CD8-positive, alpha-beta T cell (primary cell): ENCODE measurements at regions of chr1 and their contacts with region 1.

Region 1: GRCh38 chr1:180631766-180632325 is at the start of gene XPR1:
- DNase-seq: peak; percentile 97 to 99 (median 99)
- ATAC-seq: peak; percentile 96
- H3K4me3 ChIP-seq: peak within 1 kb of the TSS; percentile 93 to 94
- H3K4me3 Mint-ChIP-seq: no peak within 1 kb of the TSS
- H3K27ac ChIP-seq: peak within 1 kb of the TSS; percentile 89 to 94
- H3K27ac Mint-ChIP-seq: peak within 1 kb of the TSS; percentile 43
- H3K4me1 ChIP-seq: peaks cover 23% of the 10 kb centered on the region
- H3K4me1 Mint-ChIP-seq: peaks cover 20% of the 10 kb centered on the region
- H3K27me3 ChIP-seq: no peaks in the 10 kb centered on the region
- H3K27me3 Mint-ChIP-seq: peaks cover 3% of the 10 kb centered on the region
- CTCF ChIP-seq: no peak
- total RNA-seq, gene XPR1: 11.6 to 12.3 TPM

Region 2: GRCh38 chr1:179025125-179025974 is 1606.5 kb before region 1 on chr1 and contains the start of gene FAM20B:
- CTCF ChIA-PET with region 1: no interaction called
- POLR2A ChIA-PET with region 1: no interaction called
- intact Hi-C with region 1: loop called in 1 of 2 experiments (anchors 10 kb)
- DNase-seq: peak; percentile 82 to 94 (median 90)
- ATAC-seq: peak; percentile 85
- H3K4me3 ChIP-seq: peak within 1 kb of the TSS; percentile 70 to 81
- H3K4me3 Mint-ChIP-seq: peak within 1 kb of the TSS; percentile 87
- H3K27ac ChIP-seq: peak within 1 kb of the TSS; percentile 77 to 83
- H3K27ac Mint-ChIP-seq: peak within 1 kb of the TSS; percentile 88
- H3K4me1 ChIP-seq: peaks cover 25% of the 10 kb centered on the region
- H3K4me1 Mint-ChIP-seq: peaks cover 40% of the 10 kb centered on the region
- H3K27me3 ChIP-seq: no peaks in the 10 kb centered on the region
- H3K27me3 Mint-ChIP-seq: no peaks in the 10 kb centered on the region
- CTCF ChIP-seq: no peak
- total RNA-seq, gene FAM20B: 11.1 to 11.2 TPM

Region 3: DNA sequence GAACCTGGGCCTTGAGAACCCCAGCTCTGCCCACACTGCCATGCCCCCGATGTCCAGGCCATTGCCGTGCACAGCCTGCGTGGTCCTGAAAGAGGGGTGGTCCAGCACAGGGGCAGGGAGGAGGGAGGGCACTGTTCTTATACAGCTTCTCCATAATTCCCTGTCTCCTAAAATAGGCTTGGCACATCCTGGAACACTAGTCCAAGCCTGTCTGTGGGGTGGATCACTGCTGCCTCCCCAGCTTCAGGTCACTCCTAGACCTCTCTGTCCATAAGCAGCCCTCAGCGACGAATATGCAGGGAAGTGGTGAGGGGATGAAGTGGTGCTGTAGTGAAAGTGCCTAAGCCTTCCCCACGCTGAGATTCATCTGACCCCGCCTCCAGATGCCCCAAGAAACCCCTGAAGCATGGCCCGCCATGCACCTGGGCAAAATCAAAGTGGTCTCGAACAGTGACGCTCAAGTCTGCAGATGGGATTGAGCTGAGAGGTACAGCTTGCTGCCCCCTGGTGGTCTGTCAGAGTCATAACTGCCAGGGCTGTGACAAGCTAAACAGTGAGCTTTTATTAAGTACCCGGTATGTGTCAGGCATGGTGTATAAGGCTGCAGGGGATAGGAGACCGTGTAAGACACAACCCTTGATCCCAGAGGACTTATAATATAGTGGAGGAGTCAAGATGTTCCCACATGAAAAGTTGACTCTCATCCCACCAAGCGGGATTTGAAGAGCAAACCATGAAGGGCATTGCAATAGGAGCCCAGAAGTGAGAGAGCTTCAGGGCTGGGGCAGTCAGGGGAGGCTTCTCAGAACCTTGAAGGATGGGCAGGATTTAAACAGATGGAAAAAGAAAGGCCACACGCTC is 822.1 kb before region 1 on chr1:
- CTCF ChIA-PET with region 1: no interaction called
- POLR2A ChIA-PET with region 1: no interaction called
- intact Hi-C with region 1: loop called in 1 of 2 experiments (anchors 10 kb)
- DNase-seq: peak; percentile 37 to 87 (median 71)
- ATAC-seq: peak; percentile 84
- H3K4me3 ChIP-seq: no peak overlapping the region
- H3K4me3 Mint-ChIP-seq: peak overlapping the region; percentile 1
- H3K27ac ChIP-seq: no peak overlapping the region
- H3K27ac Mint-ChIP-seq: no peak overlapping the region
- H3K4me1 ChIP-seq: peaks cover 11% of the 10 kb centered on the region
- H3K4me1 Mint-ChIP-seq: peaks cover 12% of the 10 kb centered on the region
- H3K27me3 ChIP-seq: no peaks in the 10 kb centered on the region
- H3K27me3 Mint-ChIP-seq: peaks cover 5% of the 10 kb centered on the region
- CTCF ChIP-seq: peak; percentile 82

Region 4: DNA sequence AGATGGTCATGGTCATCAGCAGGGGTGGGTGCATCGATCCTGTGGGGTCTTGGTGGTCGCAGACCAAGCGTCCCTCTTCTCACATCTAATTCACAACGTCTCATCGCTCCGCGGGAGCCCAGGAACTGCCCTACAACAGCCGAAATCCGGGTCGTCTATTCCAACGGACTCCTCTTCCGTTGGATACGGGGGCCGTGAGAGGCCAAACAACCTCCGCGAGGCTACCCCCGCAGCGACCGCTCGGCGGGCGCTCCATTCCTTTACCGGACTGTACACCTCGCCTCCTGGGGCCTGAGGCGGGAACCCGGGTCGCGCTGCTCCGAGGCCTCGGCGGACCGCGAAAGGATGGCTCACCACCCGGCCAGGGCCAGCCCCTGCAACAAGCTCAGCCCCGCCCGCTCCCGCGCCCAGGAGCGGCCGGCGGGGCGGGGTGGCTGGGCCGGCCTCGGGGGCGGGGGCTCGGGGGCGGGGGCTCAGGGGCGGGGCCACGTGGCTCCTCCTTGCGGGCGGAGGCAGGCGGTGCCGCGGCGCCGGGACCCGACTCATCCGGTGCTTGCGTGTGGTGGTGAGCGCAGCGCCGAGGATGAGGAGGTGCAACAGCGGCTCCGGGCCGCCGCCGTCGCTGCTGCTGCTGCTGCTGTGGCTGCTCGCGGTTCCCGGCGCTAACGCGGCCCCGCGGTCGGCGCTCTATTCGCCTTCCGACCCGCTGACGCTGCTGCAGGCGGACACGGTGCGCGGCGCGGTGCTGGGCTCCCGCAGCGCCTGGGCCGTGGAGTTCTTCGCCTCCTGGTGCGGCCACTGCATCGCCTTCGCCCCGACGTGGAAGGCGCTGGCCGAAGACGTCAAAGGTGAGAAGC is 477.3 kb before region 1 on chr1 and contains the start of gene QSOX1:
- CTCF ChIA-PET with region 1: no interaction called
- POLR2A ChIA-PET with region 1: no interaction called
- intact Hi-C with region 1: loop called in 1 of 2 experiments (anchors 1 kb)
- DNase-seq: peak; percentile 77 to 95 (median 88)
- ATAC-seq: peak; percentile 96
- H3K4me3 ChIP-seq: peak within 1 kb of the TSS; percentile 86
- H3K4me3 Mint-ChIP-seq: peak within 1 kb of the TSS; percentile 91
- H3K27ac ChIP-seq: peak within 1 kb of the TSS; percentile 60 to 62
- H3K27ac Mint-ChIP-seq: peak within 1 kb of the TSS; percentile 87
- H3K4me1 ChIP-seq: peaks cover 22% of the 10 kb centered on the region
- H3K4me1 Mint-ChIP-seq: peaks cover 43% of the 10 kb centered on the region
- H3K27me3 ChIP-seq: no peaks in the 10 kb centered on the region
- H3K27me3 Mint-ChIP-seq: no peaks in the 10 kb centered on the region
- CTCF ChIP-seq: no peak
- total RNA-seq, gene QSOX1: 12.8 to 12.9 TPM

Region 5: GRCh38 chr1:180691301-180691913 is 59.6 kb after region 1 on chr1:
- CTCF ChIA-PET with region 1: no interaction called
- POLR2A ChIA-PET with region 1: no interaction called
- intact Hi-C with region 1: no loop called
- DNase-seq: no peak
- ATAC-seq: no peak
- H3K4me3 ChIP-seq: no peak overlapping the region
- H3K4me3 Mint-ChIP-seq: no peak overlapping the region
- H3K27ac ChIP-seq: no peak overlapping the region
- H3K27ac Mint-ChIP-seq: no peak overlapping the region
- H3K4me1 ChIP-seq: peaks cover 20% of the 10 kb centered on the region
- H3K4me1 Mint-ChIP-seq: peaks cover 46% of the 10 kb centered on the region
- H3K27me3 ChIP-seq: no peaks in the 10 kb centered on the region
- H3K27me3 Mint-ChIP-seq: no peaks in the 10 kb centered on the region
- CTCF ChIP-seq: no peak

Region 6: DNA sequence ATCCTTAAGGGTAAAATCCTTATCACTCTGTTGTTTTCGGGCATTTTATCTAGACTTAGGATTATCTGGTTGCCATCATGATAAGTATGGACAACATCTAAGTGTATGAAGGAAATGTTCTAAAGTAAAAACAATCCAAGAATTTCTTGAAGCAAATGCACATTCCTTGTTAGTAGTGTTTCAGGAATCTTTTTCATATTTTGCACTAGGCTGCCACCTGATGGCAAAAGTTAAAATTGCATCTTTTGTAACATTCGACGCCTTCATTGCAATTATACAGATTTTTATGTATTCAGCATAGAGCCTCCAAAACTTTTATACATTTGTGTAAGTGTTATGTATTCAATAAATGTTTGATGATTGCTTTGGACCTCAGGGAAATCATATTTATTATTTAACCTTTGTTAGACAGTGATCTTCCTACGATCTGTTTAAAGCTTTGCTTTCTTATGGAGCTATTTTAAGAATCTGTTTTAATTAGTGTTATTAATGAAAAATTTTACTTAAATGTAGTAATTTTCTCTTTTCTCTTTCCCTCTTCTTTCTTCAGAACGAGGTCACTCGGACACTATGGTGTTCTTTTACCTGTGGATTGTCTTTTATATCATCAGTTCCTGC is 231.4 kb after region 1 on chr1:
- CTCF ChIA-PET with region 1: interaction called, 12 read pairs
- POLR2A ChIA-PET with region 1: no interaction called
- intact Hi-C with region 1: loop called (anchors 5 kb)
- DNase-seq: peak in 4 of 9 experiments; percentile 11 to 63 (median 42)
- ATAC-seq: no peak
- H3K4me3 ChIP-seq: no peak overlapping the region
- H3K4me3 Mint-ChIP-seq: no peak overlapping the region
- H3K27ac ChIP-seq: no peak overlapping the region
- H3K27ac Mint-ChIP-seq: no peak overlapping the region
- H3K4me1 ChIP-seq: no peaks in the 10 kb centered on the region
- H3K4me1 Mint-ChIP-seq: no peaks in the 10 kb centered on the region
- H3K27me3 ChIP-seq: no peaks in the 10 kb centered on the region
- H3K27me3 Mint-ChIP-seq: no peaks in the 10 kb centered on the region
- CTCF ChIP-seq: peak; percentile 93

Region 7: GRCh38 chr1:181105134-181106021 is 473.5 kb after region 1 on chr1:
- CTCF ChIA-PET with region 1: no interaction called
- POLR2A ChIA-PET with region 1: no interaction called
- intact Hi-C with region 1: loop called (anchors 5 kb)
- DNase-seq: peak; percentile 80 to 96 (median 94)
- ATAC-seq: peak; percentile 85
- H3K4me3 ChIP-seq: peak overlapping the region; percentile 61 to 76
- H3K4me3 Mint-ChIP-seq: peak overlapping the region; percentile 90
- H3K27ac ChIP-seq: peak overlapping the region; percentile 52 to 74
- H3K27ac Mint-ChIP-seq: peak overlapping the region; percentile 91
- H3K4me1 ChIP-seq: peaks cover 25% of the 10 kb centered on the region
- H3K4me1 Mint-ChIP-seq: peaks cover 40% of the 10 kb centered on the region
- H3K27me3 ChIP-seq: no peaks in the 10 kb centered on the region
- H3K27me3 Mint-ChIP-seq: no peaks in the 10 kb centered on the region
- CTCF ChIP-seq: no peak

Region 8: DNA sequence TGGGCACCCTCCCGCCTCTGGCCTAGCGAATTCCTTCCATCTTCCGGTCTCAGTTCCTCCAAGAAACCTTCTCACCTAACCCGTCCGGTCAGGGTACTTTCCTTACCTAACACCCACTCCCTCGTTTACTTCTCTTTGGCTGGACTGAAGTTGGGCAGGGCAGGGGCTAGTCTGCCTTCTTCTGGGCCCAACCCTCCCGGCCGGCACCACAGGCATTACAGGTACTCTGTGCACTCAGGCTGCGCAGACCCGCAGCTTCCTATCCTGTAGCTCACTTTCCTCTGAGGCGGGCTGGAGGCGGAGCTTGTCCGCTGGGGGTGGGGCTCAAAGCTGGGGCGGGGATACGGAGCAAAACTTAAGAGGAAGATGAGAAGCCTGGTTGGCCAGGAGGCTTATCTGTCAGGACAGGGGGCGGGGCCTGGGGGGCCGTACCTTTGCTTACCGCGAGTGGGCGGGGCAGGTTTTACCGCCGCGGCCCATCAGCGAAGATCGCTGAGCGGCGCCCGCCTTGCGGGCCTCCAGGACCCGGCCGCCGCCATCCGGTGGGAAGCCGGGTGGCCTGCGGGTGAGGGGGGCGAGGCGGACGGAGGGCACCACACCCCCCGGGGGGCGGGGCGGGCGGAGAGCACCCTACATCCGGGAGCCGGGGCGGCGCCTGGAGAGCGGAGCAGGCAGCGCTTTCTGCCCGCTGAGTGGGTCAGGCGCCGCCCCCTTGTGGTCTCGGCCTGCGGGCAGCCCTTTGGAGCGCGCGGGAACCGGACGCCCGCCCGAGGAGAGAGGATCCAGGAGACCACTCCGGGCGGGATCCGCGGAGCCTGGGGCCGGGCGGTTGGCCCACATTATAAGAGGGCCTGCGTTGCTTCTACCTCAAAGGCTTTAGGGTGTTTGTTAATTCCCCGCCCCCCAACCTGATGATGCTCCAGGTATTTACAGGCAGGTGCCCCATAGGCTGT is 1397.8 kb after region 1 on chr1:
- CTCF ChIA-PET with region 1: no interaction called
- POLR2A ChIA-PET with region 1: no interaction called
- intact Hi-C with region 1: loop called in 1 of 2 experiments (anchors 2 kb)
- DNase-seq: peak; percentile 96 to 99 (median 98)
- ATAC-seq: peak; percentile 93
- H3K4me3 ChIP-seq: peak overlapping the region; percentile 76 to 77
- H3K4me3 Mint-ChIP-seq: peak overlapping the region; percentile 93
- H3K27ac ChIP-seq: peak overlapping the region; percentile 68 to 84
- H3K27ac Mint-ChIP-seq: peak overlapping the region; percentile 98
- H3K4me1 ChIP-seq: peaks cover 16% of the 10 kb centered on the region
- H3K4me1 Mint-ChIP-seq: peaks cover 18% of the 10 kb centered on the region
- H3K27me3 ChIP-seq: no peaks in the 10 kb centered on the region
- H3K27me3 Mint-ChIP-seq: no peaks in the 10 kb centered on the region
- CTCF ChIP-seq: no peak